Left colon (tissue), 2 donors: ENCODE measurements at regions of chr9 and their contacts with region 1.

Region 1: GRCh38 chr9:127734747-127735529 is at the start of gene TOR2A:
- DNase-seq: peak; percentile 96 to 98
- ATAC-seq: peak; percentile 95
- total RNA-seq, gene TOR2A: 32.0 to 32.7 TPM

Region 2: DNA sequence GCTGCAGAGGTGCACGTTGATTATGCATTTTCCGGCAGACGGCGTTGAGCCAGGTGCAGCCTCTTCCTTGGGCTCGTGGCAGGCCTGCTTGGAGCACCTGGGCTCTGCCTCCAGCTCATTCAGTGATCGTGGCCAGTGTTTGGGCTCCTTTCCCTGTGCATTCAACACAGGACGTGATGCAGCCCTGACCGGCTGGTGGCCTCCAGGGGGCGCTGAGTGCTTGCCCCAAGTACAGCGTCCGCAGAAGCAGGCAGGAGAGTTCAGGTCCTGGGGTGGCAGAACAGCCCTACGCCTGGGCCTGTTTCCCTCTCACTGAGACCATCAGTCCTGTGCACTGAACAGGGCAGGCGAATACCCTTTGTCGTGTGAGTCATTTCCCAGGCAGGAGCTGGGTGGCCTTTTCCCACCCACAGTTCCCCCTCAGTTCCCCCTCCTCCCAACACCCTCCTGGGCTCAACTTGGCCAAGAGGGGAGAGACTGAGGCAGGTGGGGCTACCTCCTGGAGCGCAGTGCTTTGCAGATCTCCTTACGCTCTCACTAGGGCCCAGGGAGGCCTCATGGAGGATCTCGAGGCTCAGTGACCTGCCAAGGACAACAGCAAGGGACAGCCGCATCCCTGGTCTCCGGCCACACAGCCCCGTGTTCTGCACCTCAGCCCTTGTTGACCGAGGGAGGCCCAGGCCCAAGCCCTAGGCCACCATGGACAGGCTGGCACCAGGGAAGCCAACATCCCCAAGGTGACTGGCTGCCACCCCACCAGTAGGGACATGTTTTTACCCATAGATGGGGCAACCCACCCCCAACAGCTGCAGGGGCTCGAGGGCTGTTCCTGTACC is 230.8 kb before region 1 on chr9:
- intact Hi-C with region 1: loop called in 1 of 2 experiments (anchors 10 kb)
- DNase-seq: peak; percentile 80 to 92
- ATAC-seq: peak; percentile 82

Region 3: GRCh38 chr9:127555768-127556397 is 179.1 kb before region 1 on chr9:
- intact Hi-C with region 1: no loop called
- DNase-seq: peak; percentile 65 to 84
- ATAC-seq: peak; percentile 79

Region 4: DNA sequence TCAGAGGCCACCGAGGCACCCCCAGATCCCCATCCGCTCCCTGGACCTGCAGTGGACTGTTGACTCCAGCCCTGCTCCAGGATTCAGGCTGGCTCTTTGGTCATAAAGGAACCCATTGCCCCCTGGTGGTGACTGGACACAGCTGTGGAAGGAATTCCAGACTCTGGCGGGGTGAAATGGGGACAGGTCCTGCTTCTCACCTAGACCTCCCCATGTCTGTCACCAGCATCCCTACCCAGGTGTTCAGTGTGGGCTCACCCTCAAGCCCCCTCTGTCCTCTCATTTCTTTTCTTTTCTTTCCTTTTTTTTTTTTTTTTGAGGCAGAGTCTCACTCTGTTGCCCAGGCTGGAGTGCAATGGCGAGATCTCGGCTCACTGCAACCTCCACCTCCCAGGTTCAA is 148.4 kb before region 1 on chr9:
- intact Hi-C with region 1: loop called (anchors 5 kb)
- DNase-seq: peak; percentile 82 to 87
- ATAC-seq: peak; percentile 66

Region 5: DNA sequence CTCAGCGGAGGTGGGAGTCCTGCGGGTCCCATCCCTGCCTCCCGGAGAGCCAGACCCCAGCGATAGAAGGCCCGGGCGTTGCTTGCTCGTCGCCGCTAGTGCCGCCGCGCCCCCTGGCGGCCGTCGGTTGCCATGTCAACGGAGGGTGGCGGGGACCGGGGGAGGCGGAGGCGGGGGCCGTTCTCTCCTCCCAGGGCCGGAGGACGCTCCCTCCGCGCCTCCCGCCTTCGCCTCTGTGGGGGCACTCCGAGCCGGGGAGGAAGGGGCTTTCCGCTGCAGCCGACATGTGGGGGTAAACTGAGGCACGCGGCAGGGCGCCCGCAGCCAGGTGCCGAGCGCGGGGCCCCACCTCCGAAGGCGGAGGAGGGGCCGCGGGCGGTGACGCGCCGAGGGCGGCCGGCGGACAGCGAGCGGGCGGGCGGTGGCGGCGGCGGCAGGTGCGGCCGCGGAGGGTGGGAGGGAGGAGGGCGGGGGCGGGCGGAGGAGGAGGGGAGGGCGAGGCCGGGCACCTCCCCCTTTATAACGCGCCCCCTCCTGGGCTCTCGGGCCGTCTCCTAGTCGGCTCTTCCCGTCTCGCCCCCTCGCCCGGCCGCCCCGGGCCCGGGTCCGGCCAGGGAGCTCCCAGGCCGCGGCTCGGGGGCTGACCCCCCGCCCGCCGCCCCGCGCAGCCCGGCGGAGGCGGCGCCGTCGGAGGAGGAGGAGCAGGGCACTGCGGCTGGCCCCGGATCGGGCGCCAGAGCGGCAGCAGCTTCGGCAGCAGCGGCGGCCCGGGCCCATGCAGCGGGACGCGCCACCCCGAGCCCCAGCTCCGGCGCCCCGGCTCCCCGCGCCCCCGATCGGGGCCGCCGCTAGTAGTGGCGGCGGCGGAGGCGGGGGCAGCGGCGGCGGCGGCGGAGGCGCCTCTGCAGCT is 50.3 kb after region 1 on chr9:
- intact Hi-C with region 1: loop called in 1 of 2 experiments (anchors 5 kb)
- DNase-seq: peak; percentile 78 to 89
- ATAC-seq: peak; percentile 75

Region 6: GRCh38 chr9:127869310-127870152 is 134.6 kb after region 1 on chr9:
- intact Hi-C with region 1: loop called in 1 of 2 experiments (anchors 5 kb)
- DNase-seq: peak; percentile 84 to 89
- ATAC-seq: peak; percentile 85